AG04450 (cell line): ENCODE measurements at regions of chr16 and their contacts with region 1.

Region 1: GRCh38 chr16:85808926-85809325 is 9.4 kb downstream of the COX4I1 start:
- DNase-seq: no peak
- H3K4me3 ChIP-seq: no peak overlapping the region
- H3K27ac ChIP-seq: no peak overlapping the region
- H3K27me3 ChIP-seq: peaks cover 27% of the 10 kb centered on the region
- CTCF ChIP-seq: no peak

Region 2: DNA sequence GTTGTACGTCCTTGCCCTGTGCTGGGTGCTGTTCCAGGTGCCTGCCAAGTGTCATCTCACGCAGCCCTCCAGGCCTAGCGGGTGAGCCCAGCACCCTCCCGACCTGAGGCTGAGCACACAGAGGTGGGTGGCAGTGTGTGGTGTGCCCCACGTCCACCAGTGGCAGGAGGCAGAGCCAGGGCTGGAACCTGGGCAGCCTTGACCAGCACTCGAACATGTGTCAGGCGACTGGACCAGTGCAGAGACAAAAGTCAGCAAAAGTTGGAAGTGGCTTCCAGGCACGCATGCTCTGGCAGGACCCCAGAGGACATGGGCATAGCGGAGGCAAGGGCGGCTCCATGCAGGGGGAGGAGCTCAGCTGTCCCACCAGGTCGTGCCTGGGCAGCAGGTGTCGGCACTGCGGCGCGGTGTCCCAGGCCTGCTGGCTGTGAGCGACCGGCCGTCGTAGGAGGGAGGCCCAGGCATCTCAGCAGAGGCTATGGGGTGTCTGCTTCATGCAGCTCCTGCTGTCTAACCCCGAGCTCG is 26.4 kb after region 1 on chr16:
- CTCF ChIA-PET with region 1: no interaction called
- POLR2A ChIA-PET with region 1: interaction called, 10 read pairs
- DNase-seq: no peak
- H3K4me3 ChIP-seq: no peak overlapping the region
- H3K27ac ChIP-seq: no peak overlapping the region
- H3K27me3 ChIP-seq: peaks cover 46% of the 10 kb centered on the region
- CTCF ChIP-seq: no peak